Caco-2 (cell line): ENCODE measurements at regions of chr1 and their contacts with region 1.

Region 1: DNA sequence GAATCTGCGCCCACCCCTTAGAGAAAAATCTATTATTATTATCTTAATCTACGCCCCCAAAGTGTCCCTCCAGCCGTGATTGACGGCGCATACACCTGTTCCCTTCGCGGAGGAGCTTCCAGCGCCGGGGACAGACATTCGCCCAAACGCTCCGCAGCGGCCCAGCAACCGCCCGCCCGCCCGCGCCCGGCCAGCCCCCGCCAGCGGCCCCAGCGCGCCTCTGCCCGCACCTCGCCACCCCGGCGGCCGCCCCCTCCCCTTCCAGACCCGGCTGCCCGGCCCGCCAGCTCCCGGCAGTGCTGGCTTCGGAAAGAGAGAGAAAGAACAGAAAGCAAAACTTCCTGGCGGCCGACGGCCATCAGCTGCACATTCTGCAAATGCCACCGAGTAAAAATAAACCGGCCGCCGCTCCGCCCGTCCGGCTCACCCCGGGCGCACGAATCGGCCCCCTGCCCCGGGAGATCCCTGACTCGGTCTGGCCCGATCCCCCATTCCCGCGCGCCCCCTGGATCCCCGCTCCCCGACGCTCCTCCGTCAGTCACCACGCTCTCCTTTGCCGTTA is 1.7 kb downstream of the CASZ1 start:
- DNase-seq: peak in 1 of 2 experiments; percentile 18
- H3K4me3 ChIP-seq: peak overlapping the region; percentile 46
- H3K4me3 Mint-ChIP-seq: peak overlapping the region; percentile 91
- H3K27ac Mint-ChIP-seq: no peak overlapping the region
- H3K4me1 ChIP-seq: no peaks in the 10 kb centered on the region
- H3K4me1 Mint-ChIP-seq: peaks cover 7% of the 10 kb centered on the region
- H3K27me3 ChIP-seq: no peaks in the 10 kb centered on the region
- H3K27me3 Mint-ChIP-seq: peaks cover 17% of the 10 kb centered on the region
- CTCF ChIP-seq: no peak

Region 2: GRCh38 chr1:10694633-10695627 is 99.9 kb before region 1 on chr1:
- CTCF ChIA-PET with region 1: interaction called, 4 read pairs
- POLR2A ChIA-PET with region 1: no interaction called
- intact Hi-C with region 1: loop called (anchors 5 kb)
- DNase-seq: peak; percentile 91
- H3K4me3 ChIP-seq: peak overlapping the region; percentile 23
- H3K4me3 Mint-ChIP-seq: peak overlapping the region; percentile 68
- H3K27ac Mint-ChIP-seq: no peak overlapping the region
- H3K4me1 ChIP-seq: peaks cover 12% of the 10 kb centered on the region
- H3K4me1 Mint-ChIP-seq: peaks cover 10% of the 10 kb centered on the region
- H3K27me3 ChIP-seq: no peaks in the 10 kb centered on the region
- H3K27me3 Mint-ChIP-seq: no peaks in the 10 kb centered on the region
- CTCF ChIP-seq: no peak